ENCODE measurements at regions of chr2 and their contacts with region 1.

Region 1: GRCh38 chr2:60560734-60561644 is 7.5 kb upstream of the BCL11A start:
- DNase-seq: no peak
- ATAC-seq: peak; percentile 76
- H3K4me3 Mint-ChIP-seq: no peak overlapping the region
- H3K27ac Mint-ChIP-seq: no peak overlapping the region
- H3K4me1 Mint-ChIP-seq: peaks cover 12% of the 10 kb centered on the region
- H3K27me3 Mint-ChIP-seq: peaks cover 62% of the 10 kb centered on the region

Region 2: DNA sequence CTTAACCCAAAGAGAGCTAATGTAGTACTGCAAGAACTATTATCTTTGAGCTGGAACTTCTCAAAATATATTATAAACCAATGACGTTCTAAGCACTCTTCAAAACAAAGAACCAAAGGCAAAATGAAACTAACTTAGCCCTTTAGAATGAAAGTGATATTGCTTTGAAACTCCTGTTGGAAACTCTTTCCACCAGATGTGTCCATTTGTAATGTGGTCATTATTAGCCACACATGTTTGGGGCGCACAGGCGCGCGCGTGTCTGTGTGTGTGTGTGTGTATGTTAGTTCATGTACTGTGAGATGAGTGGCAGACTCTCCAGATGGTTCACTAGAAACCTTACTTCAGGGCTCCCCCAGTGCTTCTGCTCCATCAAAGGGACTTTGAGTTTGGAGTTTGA is 331.0 kb before region 1 on chr2:
- CTCF ChIA-PET with region 1: no interaction called
- POLR2A ChIA-PET with region 1: no interaction called
- DNase-seq: no peak
- ATAC-seq: no peak
- H3K4me3 Mint-ChIP-seq: no peak overlapping the region
- H3K27ac Mint-ChIP-seq: no peak overlapping the region
- H3K4me1 Mint-ChIP-seq: no peaks in the 10 kb centered on the region
- H3K27me3 Mint-ChIP-seq: no peaks in the 10 kb centered on the region

Region 3: DNA sequence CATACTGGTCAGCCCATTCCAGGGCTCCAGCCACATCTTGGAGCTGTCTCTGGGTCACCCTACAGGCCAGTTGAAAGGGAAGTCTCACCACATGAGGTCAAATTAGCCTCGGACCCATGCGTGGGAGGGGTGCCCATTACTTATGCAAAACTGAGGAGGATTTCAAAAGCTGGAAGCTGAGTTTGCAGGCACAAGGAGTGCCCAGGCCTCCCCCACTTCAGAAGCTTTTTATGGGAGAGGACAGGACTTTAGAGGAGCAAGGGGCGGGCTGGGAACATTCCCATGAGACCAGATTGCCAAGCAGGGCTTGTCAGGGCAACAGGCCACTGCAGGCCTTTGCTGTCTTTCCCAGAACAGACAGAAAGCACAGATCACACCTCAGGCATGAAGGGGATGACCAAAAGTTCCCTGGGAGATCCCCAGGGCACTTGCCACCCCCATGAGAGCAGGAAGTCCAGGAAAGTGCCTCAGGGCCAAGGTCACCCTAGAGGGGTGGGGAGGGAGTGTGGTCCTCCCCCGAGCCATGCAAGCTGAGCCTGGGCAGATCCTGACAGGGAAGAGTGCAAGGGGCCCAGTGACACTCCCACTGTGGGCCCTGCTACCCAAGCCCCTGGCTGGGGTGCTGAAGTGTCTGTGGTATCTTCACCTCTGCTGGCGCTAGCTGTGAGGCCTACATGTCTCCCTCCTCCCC is 275.2 kb before region 1 on chr2:
- CTCF ChIA-PET with region 1: no interaction called
- POLR2A ChIA-PET with region 1: no interaction called
- DNase-seq: no peak
- ATAC-seq: no peak
- H3K4me3 Mint-ChIP-seq: no peak overlapping the region
- H3K27ac Mint-ChIP-seq: no peak overlapping the region
- H3K4me1 Mint-ChIP-seq: no peaks in the 10 kb centered on the region
- H3K27me3 Mint-ChIP-seq: peaks cover 3% of the 10 kb centered on the region

Region 4: GRCh38 chr2:60550178-60550983 is 10.6 kb before region 1 on chr2:
- CTCF ChIA-PET with region 1: interaction called, 11 read pairs
- POLR2A ChIA-PET with region 1: no interaction called
- DNase-seq: peak; percentile 62
- ATAC-seq: peak; percentile 53
- H3K4me3 Mint-ChIP-seq: peak overlapping the region; percentile 81
- H3K27ac Mint-ChIP-seq: no peak overlapping the region
- H3K4me1 Mint-ChIP-seq: peaks cover 33% of the 10 kb centered on the region
- H3K27me3 Mint-ChIP-seq: peaks cover 68% of the 10 kb centered on the region

Region 5: GRCh38 chr2:60581433-60582282 is 20.7 kb after region 1 on chr2:
- CTCF ChIA-PET with region 1: interaction called, 93 read pairs
- POLR2A ChIA-PET with region 1: interaction called, 3 read pairs
- DNase-seq: peak; percentile 73
- ATAC-seq: peak; percentile 96
- H3K4me3 Mint-ChIP-seq: no peak overlapping the region
- H3K27ac Mint-ChIP-seq: no peak overlapping the region
- H3K4me1 Mint-ChIP-seq: peaks cover 2% of the 10 kb centered on the region
- H3K27me3 Mint-ChIP-seq: peaks cover 28% of the 10 kb centered on the region

Region 6: DNA sequence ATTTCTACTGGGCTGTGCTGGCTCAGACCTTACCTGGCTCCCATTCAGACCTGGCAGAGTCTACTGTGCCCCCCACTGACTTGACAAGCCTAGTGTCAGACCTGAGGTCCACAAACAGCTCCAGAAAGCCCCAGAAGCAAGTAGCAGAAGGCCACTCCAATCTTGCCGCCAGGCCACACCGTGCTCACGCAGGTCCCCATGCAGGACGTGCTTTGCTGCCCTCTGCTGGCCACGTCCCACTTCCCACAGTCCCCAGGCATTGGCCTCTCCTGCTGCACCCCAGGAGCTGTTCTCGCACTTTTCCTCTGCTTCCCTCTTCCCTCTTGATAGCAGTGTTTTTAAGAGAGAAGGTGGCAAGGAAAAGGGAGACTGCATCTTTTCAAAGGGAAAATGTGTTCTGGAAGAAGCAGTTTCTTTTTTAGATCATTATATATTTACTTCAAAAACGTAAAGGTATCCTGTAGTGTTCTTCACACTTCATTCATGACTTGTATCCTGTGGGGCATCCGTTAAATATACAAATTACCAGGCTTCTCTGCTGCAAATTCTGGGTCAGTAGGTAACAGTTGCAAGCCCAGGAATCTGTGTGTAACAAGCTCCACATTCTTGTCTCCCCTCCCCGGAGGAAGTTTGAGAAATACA is 113.7 kb after region 1 on chr2:
- CTCF ChIA-PET with region 1: interaction called, 21 read pairs
- POLR2A ChIA-PET with region 1: no interaction called
- DNase-seq: peak; percentile 88
- ATAC-seq: peak; percentile 100
- H3K4me3 Mint-ChIP-seq: no peak overlapping the region
- H3K27ac Mint-ChIP-seq: no peak overlapping the region
- H3K4me1 Mint-ChIP-seq: peaks cover 29% of the 10 kb centered on the region
- H3K27me3 Mint-ChIP-seq: peaks cover 8% of the 10 kb centered on the region

Region 7: GRCh38 chr2:60873381-60873780 is 312.4 kb after region 1 on chr2:
- CTCF ChIA-PET with region 1: no interaction called
- POLR2A ChIA-PET with region 1: no interaction called
- DNase-seq: peak; percentile 1
- ATAC-seq: no peak
- H3K4me3 Mint-ChIP-seq: no peak overlapping the region
- H3K27ac Mint-ChIP-seq: no peak overlapping the region
- H3K4me1 Mint-ChIP-seq: peaks cover 9% of the 10 kb centered on the region
- H3K27me3 Mint-ChIP-seq: no peaks in the 10 kb centered on the region